ENCODE measurements at regions of chr12 and their contacts with region 1.

Region 1: DNA sequence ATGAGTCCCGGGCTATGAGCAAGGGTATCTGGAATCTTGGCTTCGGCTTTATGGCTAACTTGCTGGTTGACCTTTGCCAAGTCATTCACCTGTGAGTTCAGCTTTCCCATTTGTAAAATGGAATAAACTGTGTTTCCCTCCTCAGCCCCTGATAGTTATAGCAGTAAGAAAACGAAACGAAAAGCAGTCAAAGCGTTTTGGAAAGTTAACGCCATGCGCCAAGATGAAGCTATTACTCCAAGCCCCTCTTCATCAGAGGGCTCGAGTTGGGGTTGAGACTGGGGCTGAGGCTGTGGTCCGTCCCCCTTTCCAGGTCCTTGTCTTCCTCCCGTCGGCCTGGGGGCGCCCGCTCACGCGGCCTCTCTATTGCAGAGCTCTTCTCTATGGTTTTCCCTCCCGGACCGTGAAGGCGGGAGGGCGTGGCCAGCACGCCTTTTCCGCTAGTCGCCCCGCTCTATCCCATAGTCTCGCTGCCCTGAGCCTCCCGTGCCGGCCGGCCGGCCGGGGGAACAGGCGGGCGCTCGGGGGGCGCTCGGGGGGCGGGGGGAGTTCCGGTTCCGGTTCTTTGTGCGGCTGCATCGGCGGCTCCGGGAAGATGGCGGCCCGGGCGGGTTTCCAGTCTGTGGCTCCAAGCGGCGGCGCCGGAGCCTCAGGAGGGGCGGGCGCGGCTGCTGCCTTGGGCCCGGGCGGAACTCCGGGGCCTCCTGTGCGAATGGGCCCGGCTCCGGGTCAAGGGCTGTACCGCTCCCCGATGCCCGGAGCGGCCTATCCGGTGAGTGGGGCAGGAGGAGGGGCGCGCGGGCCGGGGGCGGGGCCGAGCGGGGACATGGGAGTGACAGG is at the start of gene SMARCD1:
- DNase-seq: peak; percentile 82
- ATAC-seq: peak; percentile 86
- H3K4me3 Mint-ChIP-seq: peak within 1 kb of the TSS; percentile 94
- H3K27ac Mint-ChIP-seq: peak within 1 kb of the TSS; percentile 97
- H3K4me1 Mint-ChIP-seq: peaks cover 35% of the 10 kb centered on the region
- H3K27me3 Mint-ChIP-seq: no peaks in the 10 kb centered on the region
- CTCF ChIP-seq: no peak
- total RNA-seq, gene SMARCD1: 101 and 108 TPM in 2 replicates

Region 2: GRCh38 chr12:49763006-49763591 is 321.9 kb before region 1 on chr12:
- CTCF ChIA-PET with region 1: no interaction called
- POLR2A ChIA-PET with region 1: no interaction called
- intact Hi-C with region 1: no loop called
- DNase-seq: peak; percentile 59
- ATAC-seq: peak; percentile 83
- H3K4me3 Mint-ChIP-seq: no peak overlapping the region
- H3K27ac Mint-ChIP-seq: peak overlapping the region; percentile 79
- H3K4me1 Mint-ChIP-seq: peaks cover 25% of the 10 kb centered on the region
- H3K27me3 Mint-ChIP-seq: no peaks in the 10 kb centered on the region
- CTCF ChIP-seq: no peak

Region 3: GRCh38 chr12:49903695-49904423 is 181.1 kb before region 1 on chr12 and contains the start of gene FAIM2:
- CTCF ChIA-PET with region 1: no interaction called
- POLR2A ChIA-PET with region 1: no interaction called
- intact Hi-C with region 1: no loop called
- DNase-seq: no peak
- ATAC-seq: peak; percentile 61
- H3K4me3 Mint-ChIP-seq: peak within 1 kb of the TSS; percentile 78
- H3K27ac Mint-ChIP-seq: no peak within 1 kb of the TSS
- H3K4me1 Mint-ChIP-seq: peaks cover 9% of the 10 kb centered on the region
- H3K27me3 Mint-ChIP-seq: peaks cover 35% of the 10 kb centered on the region
- CTCF ChIP-seq: no peak
- total RNA-seq, gene FAIM2: not detected in 2 replicates

Region 4: GRCh38 chr12:50025187-50026059 is 59.6 kb before region 1 on chr12 and contains the start of gene RACGAP1:
- CTCF ChIA-PET with region 1: no interaction called
- POLR2A ChIA-PET with region 1: interaction called, 16 read pairs
- intact Hi-C with region 1: loop called (anchors 1 kb)
- DNase-seq: peak; percentile 83
- ATAC-seq: peak; percentile 97
- H3K4me3 Mint-ChIP-seq: peak within 1 kb of the TSS; percentile 96
- H3K27ac Mint-ChIP-seq: peak within 1 kb of the TSS; percentile 79
- H3K4me1 Mint-ChIP-seq: peaks cover 16% of the 10 kb centered on the region
- H3K27me3 Mint-ChIP-seq: no peaks in the 10 kb centered on the region
- CTCF ChIP-seq: no peak
- total RNA-seq, gene RACGAP1: 12.2 and 12.6 TPM in 2 replicates

Region 5: DNA sequence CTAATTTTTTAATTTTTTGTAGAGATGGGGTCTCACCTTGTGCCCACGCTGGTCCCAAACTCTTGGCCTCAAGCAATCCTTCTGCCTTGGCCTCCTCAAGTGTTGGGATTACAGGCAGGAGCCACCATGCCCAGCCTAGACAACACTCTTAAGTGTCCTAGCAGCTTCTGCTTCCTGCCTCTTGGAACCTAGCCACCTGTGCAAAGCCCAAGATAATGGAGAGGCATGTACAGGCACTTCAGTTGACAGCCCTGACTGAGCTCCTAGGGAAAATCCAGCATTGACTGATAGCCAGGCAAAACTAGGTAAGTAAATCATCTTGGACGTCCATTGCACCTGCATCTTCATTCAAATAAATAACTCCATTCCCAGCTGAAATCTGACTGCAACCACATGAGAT is 42.6 kb after region 1 on chr12:
- CTCF ChIA-PET with region 1: interaction called, 6 read pairs
- POLR2A ChIA-PET with region 1: no interaction called
- intact Hi-C with region 1: loop called (anchors 5 kb)
- DNase-seq: no peak
- ATAC-seq: no peak
- H3K4me3 Mint-ChIP-seq: no peak overlapping the region
- H3K27ac Mint-ChIP-seq: no peak overlapping the region
- H3K4me1 Mint-ChIP-seq: peaks cover 32% of the 10 kb centered on the region
- H3K27me3 Mint-ChIP-seq: no peaks in the 10 kb centered on the region
- CTCF ChIP-seq: no peak